ENCODE measurements at regions of chr3 and their contacts with region 1.

Region 1: GRCh38 chr3:147191795-147192385 is 214.5 kb downstream of the ZIC4 start:
- DNase-seq: peak; percentile 40 to 61
- H3K4me3 ChIP-seq: no peak overlapping the region
- H3K4me3 Mint-ChIP-seq: no peak overlapping the region
- H3K27ac Mint-ChIP-seq: no peak overlapping the region
- H3K4me1 ChIP-seq: no peaks in the 10 kb centered on the region
- H3K4me1 Mint-ChIP-seq: no peaks in the 10 kb centered on the region
- H3K27me3 ChIP-seq: no peaks in the 10 kb centered on the region
- H3K27me3 Mint-ChIP-seq: no peaks in the 10 kb centered on the region
- CTCF ChIP-seq: peak; percentile 77 to 82

Region 2: DNA sequence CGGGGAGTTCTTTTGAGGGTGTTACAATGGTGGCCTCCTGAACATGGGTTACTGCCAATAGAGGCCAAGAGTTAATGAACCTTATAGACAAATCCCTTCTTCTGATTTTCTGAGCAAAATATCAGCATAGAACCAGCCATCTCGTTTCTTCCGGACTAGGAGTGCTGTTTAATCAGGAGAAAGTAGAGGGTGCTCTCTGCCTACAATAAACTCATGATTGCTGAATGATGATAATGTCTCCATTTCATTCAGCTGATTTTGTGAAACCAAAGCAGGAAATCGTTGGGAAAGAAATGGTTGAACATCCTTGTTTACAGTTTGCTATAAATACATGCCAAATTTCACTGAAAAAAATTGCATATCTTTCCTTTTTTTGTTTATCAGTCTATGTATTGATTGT is 444.0 kb before region 1 on chr3:
- CTCF ChIA-PET with region 1: no interaction called
- POLR2A ChIA-PET with region 1: no interaction called
- intact Hi-C with region 1: loop called (anchors 1 kb)
- DNase-seq: no peak
- H3K4me3 ChIP-seq: no peak overlapping the region
- H3K4me3 Mint-ChIP-seq: no peak overlapping the region
- H3K27ac Mint-ChIP-seq: no peak overlapping the region
- H3K4me1 ChIP-seq: no peaks in the 10 kb centered on the region
- H3K4me1 Mint-ChIP-seq: no peaks in the 10 kb centered on the region
- H3K27me3 ChIP-seq: no peaks in the 10 kb centered on the region
- H3K27me3 Mint-ChIP-seq: no peaks in the 10 kb centered on the region
- CTCF ChIP-seq: no peak

Region 3: GRCh38 chr3:146817704-146818103 is 374.2 kb before region 1 on chr3:
- CTCF ChIA-PET with region 1: interaction called, 4 read pairs
- POLR2A ChIA-PET with region 1: no interaction called
- intact Hi-C with region 1: loop called (anchors 1 kb)
- DNase-seq: no peak
- H3K4me3 ChIP-seq: no peak overlapping the region
- H3K4me3 Mint-ChIP-seq: no peak overlapping the region
- H3K27ac Mint-ChIP-seq: no peak overlapping the region
- H3K4me1 ChIP-seq: no peaks in the 10 kb centered on the region
- H3K4me1 Mint-ChIP-seq: no peaks in the 10 kb centered on the region
- H3K27me3 ChIP-seq: no peaks in the 10 kb centered on the region
- H3K27me3 Mint-ChIP-seq: no peaks in the 10 kb centered on the region
- CTCF ChIP-seq: no peak

Region 4: DNA sequence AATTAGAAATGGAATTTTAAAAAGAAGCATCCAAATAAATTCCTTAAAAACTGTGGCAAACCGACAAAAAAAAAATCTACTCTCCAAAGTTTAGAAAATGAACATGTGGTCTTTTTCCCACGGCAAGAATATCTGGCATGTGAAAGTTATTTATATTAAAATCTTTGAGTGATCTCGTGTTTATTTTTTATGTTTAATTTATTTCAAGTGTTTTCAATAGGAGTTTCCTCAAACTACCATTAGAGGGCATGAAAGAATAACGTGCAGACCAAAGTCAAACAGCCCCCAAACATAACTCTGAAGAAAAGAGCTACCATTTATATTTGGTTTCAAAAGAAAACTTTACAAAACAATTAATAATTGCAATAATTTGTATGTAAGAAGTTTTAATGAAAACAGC is 71.9 kb before region 1 on chr3:
- CTCF ChIA-PET with region 1: interaction called, 3 read pairs
- POLR2A ChIA-PET with region 1: no interaction called
- intact Hi-C with region 1: loop called (anchors 1 kb)
- DNase-seq: no peak
- H3K4me3 ChIP-seq: no peak overlapping the region
- H3K4me3 Mint-ChIP-seq: no peak overlapping the region
- H3K27ac Mint-ChIP-seq: no peak overlapping the region
- H3K4me1 ChIP-seq: no peaks in the 10 kb centered on the region
- H3K4me1 Mint-ChIP-seq: no peaks in the 10 kb centered on the region
- H3K27me3 ChIP-seq: no peaks in the 10 kb centered on the region
- H3K27me3 Mint-ChIP-seq: no peaks in the 10 kb centered on the region
- CTCF ChIP-seq: peak in 1 of 2 experiments; percentile 19

Region 5: DNA sequence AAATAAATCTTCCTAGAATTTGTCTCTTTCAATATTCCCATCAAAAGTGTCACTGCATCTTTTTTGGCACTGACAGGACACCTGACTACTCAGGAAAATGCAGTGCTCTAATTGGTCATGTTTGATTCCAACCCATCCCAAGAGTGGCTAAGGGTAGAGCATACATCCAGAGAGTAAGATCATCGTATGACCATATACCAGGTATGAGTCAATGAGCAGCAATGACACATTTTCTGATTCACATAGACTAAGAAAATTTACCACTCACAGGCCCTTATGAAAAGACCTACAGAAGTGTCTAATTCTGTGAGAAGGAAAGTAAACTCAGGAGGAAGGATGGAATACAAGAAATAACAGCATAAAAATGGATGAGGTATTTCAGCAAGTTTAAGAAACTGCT is 651.4 kb after region 1 on chr3:
- CTCF ChIA-PET with region 1: no interaction called
- POLR2A ChIA-PET with region 1: no interaction called
- intact Hi-C with region 1: no loop called
- DNase-seq: no peak
- H3K4me3 ChIP-seq: no peak overlapping the region
- H3K4me3 Mint-ChIP-seq: no peak overlapping the region
- H3K27ac Mint-ChIP-seq: no peak overlapping the region
- H3K4me1 ChIP-seq: no peaks in the 10 kb centered on the region
- H3K4me1 Mint-ChIP-seq: no peaks in the 10 kb centered on the region
- H3K27me3 ChIP-seq: no peaks in the 10 kb centered on the region
- H3K27me3 Mint-ChIP-seq: no peaks in the 10 kb centered on the region
- CTCF ChIP-seq: no peak

Measured in Caco-2 (cell line).